ENCODE measurements at regions of chr1 and their contacts with region 1.

Region 1: DNA sequence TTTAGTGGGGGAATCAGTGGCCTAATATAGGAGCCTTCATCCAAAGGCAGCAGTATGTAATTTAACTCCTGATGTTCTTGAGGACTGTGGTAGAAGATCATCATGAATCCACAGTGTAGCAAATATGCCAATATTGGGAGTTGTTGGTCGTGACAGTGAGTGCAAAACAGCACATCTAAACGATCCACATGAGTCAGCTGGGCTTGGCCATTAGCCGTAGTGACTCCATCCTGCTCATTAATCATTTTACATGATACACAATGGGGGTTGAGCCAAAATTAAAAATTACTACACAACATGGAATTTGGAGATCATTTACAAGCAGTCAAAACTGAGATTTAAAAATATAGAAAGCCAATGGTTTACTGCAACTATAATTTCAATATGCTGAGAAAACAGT is 653.9 kb upstream of the CAMK1G start:
- DNase-seq: peak; percentile 97
- ATAC-seq: peak; percentile 88
- H3K4me3 ChIP-seq: no peak overlapping the region
- H3K27ac ChIP-seq: peak overlapping the region; percentile 91
- H3K4me1 ChIP-seq: peaks cover 56% of the 10 kb centered on the region
- H3K27me3 ChIP-seq: no peaks in the 10 kb centered on the region
- CTCF ChIP-seq: no peak

Region 2: GRCh38 chr1:208919371-208919770 is 10.2 kb before region 1 on chr1:
- CTCF ChIA-PET with region 1: interaction called, 3 read pairs
- POLR2A ChIA-PET with region 1: no interaction called
- intact Hi-C with region 1: loop called (anchors 1 kb)
- DNase-seq: peak; percentile 94
- ATAC-seq: peak; percentile 63
- H3K4me3 ChIP-seq: no peak overlapping the region
- H3K27ac ChIP-seq: peak overlapping the region; percentile 91
- H3K4me1 ChIP-seq: peaks cover 63% of the 10 kb centered on the region
- H3K27me3 ChIP-seq: no peaks in the 10 kb centered on the region
- CTCF ChIP-seq: no peak

Region 3: DNA sequence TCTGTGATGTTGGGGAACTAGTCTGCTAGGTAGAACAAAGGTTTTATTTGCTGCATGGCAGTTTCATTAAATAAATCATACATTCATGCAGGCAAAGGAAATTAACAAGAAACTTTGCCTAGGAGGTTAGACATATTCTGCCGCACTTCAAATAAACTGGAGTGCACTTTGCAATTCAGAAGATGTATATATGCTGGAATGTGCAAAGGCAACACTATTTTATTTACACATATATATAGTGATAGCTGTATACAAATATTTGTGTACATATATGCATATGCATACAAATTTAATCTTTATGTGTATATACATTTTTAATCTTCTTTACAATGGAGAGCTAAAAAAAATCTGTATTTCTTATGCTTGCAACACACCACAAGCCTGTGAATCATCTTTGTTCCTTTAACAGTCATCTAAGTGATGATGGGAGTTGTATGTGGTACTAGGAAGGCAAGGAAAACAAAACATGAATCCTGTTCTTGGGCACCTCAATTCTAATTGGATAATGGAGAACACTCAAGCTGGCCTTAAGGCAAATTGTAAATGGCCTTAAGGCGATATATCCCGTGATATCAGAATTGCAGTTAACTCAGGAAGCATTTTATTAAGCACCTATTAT is 48.2 kb after region 1 on chr1:
- CTCF ChIA-PET with region 1: no interaction called
- POLR2A ChIA-PET with region 1: no interaction called
- intact Hi-C with region 1: loop called (anchors 2 kb)
- DNase-seq: peak; percentile 62
- ATAC-seq: peak; percentile 40
- H3K4me3 ChIP-seq: peak overlapping the region; percentile 0; the same call in 1 of the 2 replicates
- H3K27ac ChIP-seq: peak overlapping the region; percentile 47
- H3K4me1 ChIP-seq: peaks cover 50% of the 10 kb centered on the region
- H3K27me3 ChIP-seq: no peaks in the 10 kb centered on the region
- CTCF ChIP-seq: no peak

Measured in PC-3 (cell line).